ENCODE measurements at regions of chr4 and their contacts with region 1.

Region 1: DNA sequence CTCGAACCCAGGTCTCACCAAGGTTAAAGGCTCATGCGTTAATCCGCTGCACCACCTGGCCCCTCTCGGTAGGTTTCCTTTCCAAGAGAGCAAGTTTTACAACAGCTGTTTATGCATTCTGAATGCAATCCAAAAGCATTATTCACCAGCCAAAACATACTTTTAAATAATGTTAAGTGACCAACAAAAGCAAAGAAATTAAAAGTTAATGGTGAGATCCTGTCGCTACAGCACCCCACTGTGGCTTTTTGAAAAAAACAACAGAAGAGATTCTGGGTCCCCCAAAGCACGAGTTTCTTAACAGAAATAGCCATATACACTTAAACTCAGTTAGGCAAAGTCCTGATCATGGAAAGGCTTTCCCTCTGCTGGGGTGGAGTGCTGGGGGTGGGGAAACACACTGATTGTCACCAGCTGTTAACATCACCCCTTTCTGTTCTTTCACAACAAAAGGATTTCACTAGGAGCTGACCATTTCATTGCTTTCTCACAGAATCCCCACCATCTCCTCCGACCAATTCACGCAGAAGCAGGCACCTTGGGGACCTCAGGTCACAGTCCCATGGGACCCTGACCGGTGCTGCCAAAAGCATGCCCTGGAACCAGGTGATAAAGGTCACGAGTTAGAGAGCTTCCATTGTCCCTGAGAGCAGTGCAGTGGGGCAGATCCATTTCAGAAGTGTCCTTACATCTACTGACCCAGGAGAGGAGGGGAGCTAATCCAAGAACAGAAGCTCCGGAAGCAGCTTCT is 51.2 kb downstream of the ZNF827 start:
- DNase-seq: no peak
- CTCF ChIP-seq: no peak

Region 2: DNA sequence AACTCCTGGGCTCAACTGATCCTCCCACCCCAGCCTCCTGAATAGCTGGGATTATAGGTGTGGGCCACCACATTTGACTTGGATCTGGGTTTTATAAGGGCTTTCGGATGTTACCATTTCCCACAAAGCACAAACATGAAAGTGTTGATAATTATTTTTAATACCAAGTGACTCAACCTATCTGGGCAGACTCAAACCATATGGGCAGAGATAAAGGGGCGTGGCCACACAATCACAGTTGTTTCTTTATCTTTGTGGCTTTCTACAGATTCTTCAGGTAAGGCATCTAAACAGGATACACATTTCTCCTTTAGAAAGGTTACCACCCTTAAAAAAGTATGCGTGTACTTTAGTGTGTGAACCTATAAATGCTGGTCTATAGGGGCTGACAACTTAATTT is 71.3 kb before region 1 on chr4:
- CTCF ChIA-PET with region 1: no interaction called
- POLR2A ChIA-PET with region 1: no interaction called
- DNase-seq: no peak
- CTCF ChIP-seq: no peak

Region 3: GRCh38 chr4:145876531-145877180 is 10.8 kb before region 1 on chr4:
- CTCF ChIA-PET with region 1: interaction called, 16 read pairs
- POLR2A ChIA-PET with region 1: no interaction called
- DNase-seq: no peak
- CTCF ChIP-seq: no peak

Region 4: DNA sequence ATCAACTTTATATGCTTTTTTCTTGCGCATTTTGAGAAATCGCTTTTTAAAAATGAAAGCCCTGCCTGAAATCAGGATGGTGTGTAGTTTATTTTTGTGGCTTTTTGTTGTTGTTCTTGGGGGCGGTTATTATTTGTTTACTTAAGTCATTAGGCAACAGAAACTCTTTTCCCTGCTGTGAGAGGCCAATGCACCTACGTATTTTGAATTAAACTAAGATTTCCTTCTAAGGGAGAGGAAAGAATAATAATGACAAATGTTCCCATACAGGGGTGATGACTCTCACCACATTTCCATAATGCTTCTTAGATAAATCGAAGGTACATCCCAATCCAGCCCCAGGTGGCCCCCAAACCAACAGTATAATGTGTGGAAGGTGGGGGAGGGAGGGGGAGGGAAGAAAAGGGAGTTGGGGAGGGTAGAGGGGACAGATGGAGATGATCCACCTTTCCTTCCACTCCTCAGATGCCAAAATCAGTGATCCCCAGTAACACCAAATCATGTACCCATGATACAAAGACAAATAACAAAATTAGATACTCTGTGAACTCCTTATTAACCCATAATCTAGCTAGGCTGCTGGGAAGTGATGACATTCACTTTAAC is 11.6 kb after region 1 on chr4:
- CTCF ChIA-PET with region 1: interaction called, 15 read pairs
- POLR2A ChIA-PET with region 1: no interaction called
- DNase-seq: no peak
- CTCF ChIP-seq: no peak

Measured in GM10248 (cell line).